ENCODE measurements at regions of chr11 and their contacts with region 1.

Region 1: DNA sequence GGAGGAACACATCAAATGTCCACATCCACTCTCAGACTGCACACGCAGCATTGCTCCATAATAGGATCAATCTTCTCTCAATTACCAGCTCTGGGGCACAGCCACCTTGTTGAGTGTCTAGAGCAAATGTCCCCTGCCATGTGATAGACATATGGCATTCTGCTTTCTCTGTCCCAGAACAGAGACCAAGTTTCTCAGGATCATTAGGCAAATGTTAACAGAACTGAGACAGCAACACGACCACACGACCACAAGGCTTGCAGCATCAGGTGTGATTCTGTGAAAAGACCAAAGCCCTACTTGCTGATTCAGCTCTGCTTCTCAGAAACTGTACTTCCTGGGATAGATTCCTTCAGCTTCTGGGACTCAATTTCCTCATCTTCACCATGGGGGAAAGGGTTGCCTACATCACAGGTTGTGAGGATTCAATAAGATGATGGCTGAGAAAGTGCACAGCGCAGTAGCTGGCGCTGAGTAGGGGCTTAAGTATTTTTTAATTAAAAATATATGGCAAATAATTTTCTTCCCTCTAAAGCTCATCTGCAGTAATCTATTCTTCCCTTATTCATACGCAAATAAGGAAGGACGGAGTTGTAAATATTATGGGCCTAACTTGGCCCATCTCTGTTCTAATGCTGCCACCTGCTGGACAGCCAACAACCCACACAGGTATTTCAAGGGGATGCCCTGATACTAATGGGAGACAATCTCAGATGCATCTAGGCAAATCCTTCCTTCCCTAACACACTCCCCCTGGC is 54.3 kb upstream of the USP47 start:
- DNase-seq: peak; percentile 63 to 77 (median 66)
- ATAC-seq: peak; percentile 97
- H3K4me3 ChIP-seq: no peak overlapping the region
- H3K27ac ChIP-seq: no peak overlapping the region
- H3K4me1 ChIP-seq: no peaks in the 10 kb centered on the region
- H3K27me3 ChIP-seq: peaks cover 0 to 3% of the 10 kb centered on the region in 2 experiments; a peak in 1 of 5 replicates
- CTCF ChIP-seq: peak; percentile 81 to 95 (median 83)
- EP300 ChIP-seq: no peak
- POLR2A ChIP-seq: no peak
- RAD21 ChIP-seq: peak; percentile 86 to 90

Region 2: DNA sequence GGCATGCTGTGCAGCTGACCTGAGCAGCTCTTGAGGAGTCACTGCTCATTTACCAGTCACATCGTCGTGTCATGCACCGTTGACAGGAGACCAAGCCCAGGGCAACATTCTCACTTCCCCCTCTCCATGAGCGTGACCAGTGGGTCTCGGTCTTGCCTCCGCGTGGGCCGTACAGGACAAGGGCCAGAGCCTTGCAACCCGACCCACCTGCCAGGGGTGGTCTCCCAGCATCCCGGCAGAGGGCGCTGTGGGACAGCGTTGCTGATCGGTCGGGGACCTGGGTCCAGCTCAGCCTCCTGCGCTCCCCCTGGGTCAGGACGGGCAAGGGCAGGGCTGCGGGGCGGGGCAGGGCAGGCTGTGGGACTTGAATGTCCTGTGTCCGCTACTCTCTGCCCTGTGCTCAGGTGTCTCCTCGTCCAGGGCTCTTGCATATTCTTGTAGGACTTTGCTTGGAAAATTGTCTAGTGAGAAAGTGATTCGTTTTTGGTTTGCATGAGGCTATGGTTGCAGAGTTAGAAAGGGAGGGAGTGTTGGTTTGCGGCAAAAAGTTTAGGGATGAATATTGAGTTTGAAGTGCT is 995.0 kb before region 1 on chr11:
- CTCF ChIA-PET with region 1: interaction called, 9 read pairs
- POLR2A ChIA-PET with region 1: no interaction called
- in situ Hi-C with region 1: loop called (anchors 10 kb)
- intact Hi-C with region 1: loop called (anchors 10 kb)
- DNase-seq: peak; percentile 88 to 92 (median 90)
- ATAC-seq: peak; percentile 93
- H3K4me3 ChIP-seq: no peak overlapping the region
- H3K27ac ChIP-seq: no peak overlapping the region
- H3K4me1 ChIP-seq: peaks cover 8 to 9% of the 10 kb centered on the region in 2 experiments; a peak in 4 of 5 replicates
- H3K27me3 ChIP-seq: peaks cover 0 to 8% of the 10 kb centered on the region in 2 experiments; a peak in 2 of 5 replicates
- CTCF ChIP-seq: peak; percentile 97 to 98 (median 97)
- EP300 ChIP-seq: no peak
- POLR2A ChIP-seq: no peak
- RAD21 ChIP-seq: peak; percentile 95 to 98

Region 3: DNA sequence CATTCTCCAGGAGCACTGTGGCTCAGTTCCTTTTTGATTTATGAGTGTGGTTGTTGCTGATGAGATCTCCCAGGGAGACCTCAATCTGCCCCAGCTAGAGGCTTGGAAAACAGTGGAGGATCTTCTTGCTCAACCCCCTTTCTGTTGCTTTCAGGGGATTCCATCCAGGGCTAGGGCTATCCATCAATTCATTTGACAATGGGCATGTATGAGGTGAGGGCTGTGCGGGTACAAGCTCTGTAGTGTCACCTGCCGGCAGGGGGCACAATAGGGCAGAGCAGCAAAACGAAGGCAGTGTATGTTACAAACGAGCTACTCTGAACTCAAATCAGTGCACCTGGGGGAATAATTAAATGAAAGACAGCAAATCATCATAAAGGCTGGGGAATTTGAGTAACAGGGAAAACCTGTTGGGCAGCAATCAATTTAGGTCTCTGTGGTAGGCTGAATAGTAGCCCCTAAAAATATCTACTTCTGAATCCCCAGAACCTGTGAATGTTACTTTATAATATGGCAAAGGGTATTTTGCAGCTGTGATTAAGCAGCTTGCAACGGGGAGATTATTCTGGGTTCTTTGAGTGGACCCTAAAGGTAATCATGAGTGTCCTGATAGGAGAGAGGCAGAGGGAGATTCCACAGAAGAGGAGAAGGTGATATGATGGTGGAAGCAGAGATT is 759.3 kb before region 1 on chr11:
- CTCF ChIA-PET with region 1: interaction called, 4 read pairs
- POLR2A ChIA-PET with region 1: no interaction called
- in situ Hi-C with region 1: loop called (anchors 5 kb)
- intact Hi-C with region 1: loop called (anchors 1 kb)
- DNase-seq: peak; percentile 54 to 65 (median 62)
- ATAC-seq: peak; percentile 95
- H3K4me3 ChIP-seq: no peak overlapping the region
- H3K27ac ChIP-seq: no peak overlapping the region
- H3K4me1 ChIP-seq: no peaks in the 10 kb centered on the region
- H3K27me3 ChIP-seq: peaks cover 2 to 4% of the 10 kb centered on the region in 2 experiments; a peak in 3 of 5 replicates
- CTCF ChIP-seq: peak; percentile 75 to 85 (median 84)
- EP300 ChIP-seq: no peak
- POLR2A ChIP-seq: no peak
- RAD21 ChIP-seq: peak; percentile 60 to 80

Region 4: GRCh38 chr11:11400635-11401232 is 386.8 kb before region 1 on chr11:
- CTCF ChIA-PET with region 1: no interaction called
- POLR2A ChIA-PET with region 1: interaction called, 3 read pairs
- in situ Hi-C with region 1: no loop called
- intact Hi-C with region 1: loop called (anchors 2 kb)
- DNase-seq: peak; percentile 29 to 40 (median 33)
- ATAC-seq: peak; percentile 72; the same call in 2 of the 3 replicates
- H3K4me3 ChIP-seq: no peak overlapping the region
- H3K27ac ChIP-seq: no peak overlapping the region
- H3K4me1 ChIP-seq: no peaks in the 10 kb centered on the region
- H3K27me3 ChIP-seq: peaks cover 12 to 27% of the 10 kb centered on the region in 2 experiments; a peak in 3 of 5 replicates
- CTCF ChIP-seq: peak; percentile 41 to 56 (median 52)
- EP300 ChIP-seq: no peak
- POLR2A ChIP-seq: no peak
- RAD21 ChIP-seq: peak; percentile 31 to 58

Region 5: GRCh38 chr11:12126344-12127019 is 339.0 kb after region 1 on chr11:
- CTCF ChIA-PET with region 1: no interaction called
- POLR2A ChIA-PET with region 1: no interaction called
- in situ Hi-C with region 1: no loop called
- intact Hi-C with region 1: no loop called
- DNase-seq: peak in 1 of 4 experiments; percentile 36
- ATAC-seq: peak; percentile 13; the same call in 1 of the 3 replicates
- H3K4me3 ChIP-seq: no peak overlapping the region
- H3K27ac ChIP-seq: no peak overlapping the region; the same call in 2 of the 3 replicates
- H3K4me1 ChIP-seq: peaks cover 27 to 55% of the 10 kb centered on the region in 2 experiments
- H3K27me3 ChIP-seq: no peaks in the 10 kb centered on the region
- CTCF ChIP-seq: peak in 2 of 3 experiments; percentile 14 to 32; a peak in 2 of 6 replicates
- EP300 ChIP-seq: no peak
- POLR2A ChIP-seq: no peak
- RAD21 ChIP-seq: peak in 1 of 2 experiments; percentile 26; a peak in 1 of 4 replicates

Measured in K562 (cell line).